ENCODE measurements at regions of chr17 and their contacts with region 1.

Region 1: DNA sequence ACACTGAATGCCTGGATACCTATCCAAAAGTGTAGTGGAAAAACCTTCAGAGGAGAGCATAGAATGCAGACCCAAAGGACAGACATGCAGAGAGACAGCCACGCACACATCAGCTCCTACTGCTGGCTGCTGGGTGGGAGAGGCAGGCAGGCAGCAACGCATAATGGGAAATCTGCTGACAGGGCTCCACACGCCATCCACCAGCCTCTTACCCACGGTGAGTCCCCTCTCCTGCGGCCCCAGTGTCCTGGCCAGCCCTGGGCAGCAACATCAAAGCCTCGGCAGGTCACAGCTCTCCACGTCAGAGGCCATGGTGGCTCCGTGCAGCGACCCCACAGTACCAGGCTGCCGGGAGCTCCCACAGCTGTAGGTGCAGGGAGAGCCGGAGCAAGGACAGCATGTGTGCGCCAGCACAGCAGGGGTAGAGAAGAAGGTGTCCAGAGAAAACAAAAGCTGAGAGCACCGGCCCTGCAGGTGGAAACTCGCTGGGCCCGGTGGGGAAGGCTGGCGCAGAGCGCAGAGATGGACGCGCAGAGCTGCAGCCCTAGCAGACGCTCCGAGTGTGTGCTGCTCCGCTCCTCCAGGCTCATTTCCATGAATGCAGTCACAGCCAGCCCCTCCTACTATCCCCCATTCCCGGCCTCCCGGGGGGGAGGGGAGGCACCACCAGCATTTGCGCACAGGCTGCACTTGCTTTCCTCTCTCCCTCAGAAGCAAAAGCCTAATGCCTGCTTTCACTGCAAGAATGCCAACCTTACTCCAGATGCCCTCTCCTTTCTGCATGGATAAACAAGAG is 58.9 kb downstream of the CYTH1 start:
- DNase-seq: no peak
- H3K4me3 ChIP-seq: no peak overlapping the region
- H3K27ac ChIP-seq: no peak overlapping the region
- H3K4me1 ChIP-seq: peaks cover 25 to 82% (median 70%) of the 10 kb centered on the region in 4 experiments
- H3K27me3 ChIP-seq: no peaks in the 10 kb centered on the region

Region 2: DNA sequence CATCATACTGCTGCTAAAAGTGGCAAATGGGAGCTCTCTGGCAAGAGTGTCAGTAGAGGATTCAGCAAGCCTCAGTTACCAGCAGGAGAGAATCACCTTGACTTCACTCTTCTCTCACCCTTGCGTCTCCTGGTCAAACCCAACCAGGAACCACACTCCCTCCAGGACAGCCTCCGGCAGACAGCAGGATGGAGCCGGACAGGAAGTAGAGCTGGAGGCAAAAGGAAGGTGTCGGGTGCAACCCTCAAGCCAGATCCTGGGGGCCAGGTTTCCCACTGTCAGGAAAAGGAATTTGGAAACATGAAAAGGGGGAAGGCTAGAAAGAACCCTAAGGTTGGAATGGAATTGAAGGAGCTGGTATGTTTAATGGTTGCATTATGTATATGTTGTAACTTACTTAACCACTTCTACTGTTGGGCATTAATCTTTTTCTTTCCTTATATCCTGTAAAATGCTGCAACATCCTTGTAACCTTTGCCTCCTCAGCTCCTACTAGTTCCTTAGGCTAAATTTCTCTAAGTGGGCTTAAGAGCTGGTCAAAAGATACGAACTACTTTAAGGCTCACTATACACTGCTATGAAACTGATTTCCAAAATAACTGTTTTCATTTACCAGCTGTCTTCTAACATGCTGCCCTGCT is 18.6 kb after region 1 on chr17:
- CTCF ChIA-PET with region 1: interaction called, 11 read pairs
- POLR2A ChIA-PET with region 1: interaction called, 8 read pairs
- DNase-seq: no peak
- H3K4me3 ChIP-seq: no peak overlapping the region
- H3K27ac ChIP-seq: no peak overlapping the region
- H3K4me1 ChIP-seq: peaks cover 20 to 78% (median 50%) of the 10 kb centered on the region in 4 experiments
- H3K27me3 ChIP-seq: no peaks in the 10 kb centered on the region